ENCODE measurements at regions of chr18 and their contacts with region 1.

Region 1: DNA sequence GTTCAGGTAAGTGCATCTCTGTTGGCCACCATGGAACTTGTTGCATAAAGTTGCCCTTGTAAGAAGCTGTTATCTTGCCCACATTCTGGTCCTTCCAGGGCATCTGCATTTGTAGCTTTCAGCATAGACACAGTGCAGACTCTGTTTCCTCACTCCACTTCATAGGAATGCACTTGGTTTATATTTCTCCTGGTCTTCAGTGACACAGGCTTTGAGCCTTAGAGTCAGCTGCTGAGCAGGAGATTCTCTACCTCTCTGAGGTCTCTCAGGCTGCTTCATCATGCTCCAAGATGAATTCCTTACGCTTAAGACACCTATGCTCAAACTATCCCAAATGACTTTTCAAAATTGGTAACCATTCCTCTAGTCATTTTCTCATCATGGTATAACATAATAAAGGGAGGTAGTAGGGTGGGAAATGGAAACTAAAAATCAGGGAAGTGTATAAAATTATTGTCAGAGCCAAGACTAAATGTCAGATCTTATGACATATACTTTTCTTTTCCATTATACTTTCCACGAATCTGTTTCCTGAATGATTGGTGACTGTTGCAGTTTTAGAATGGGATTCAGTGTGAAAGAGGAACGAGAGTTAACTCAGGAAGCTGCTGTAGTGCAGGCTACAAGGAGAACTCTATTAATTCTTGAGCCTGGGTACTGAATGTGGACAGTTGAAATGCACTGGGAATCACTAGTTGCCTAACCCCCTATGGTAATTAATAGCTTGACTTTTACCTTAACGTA is 72.0 kb downstream of the GALNT1 start:
- DNase-seq: no peak
- H3K4me3 ChIP-seq: no peak overlapping the region
- H3K27ac ChIP-seq: no peak overlapping the region
- H3K4me1 ChIP-seq: no peaks in the 10 kb centered on the region
- H3K27me3 ChIP-seq: no peaks in the 10 kb centered on the region
- CTCF ChIP-seq: no peak
- EP300 ChIP-seq: no peak
- POLR2A ChIP-seq: no peak

Region 2: DNA sequence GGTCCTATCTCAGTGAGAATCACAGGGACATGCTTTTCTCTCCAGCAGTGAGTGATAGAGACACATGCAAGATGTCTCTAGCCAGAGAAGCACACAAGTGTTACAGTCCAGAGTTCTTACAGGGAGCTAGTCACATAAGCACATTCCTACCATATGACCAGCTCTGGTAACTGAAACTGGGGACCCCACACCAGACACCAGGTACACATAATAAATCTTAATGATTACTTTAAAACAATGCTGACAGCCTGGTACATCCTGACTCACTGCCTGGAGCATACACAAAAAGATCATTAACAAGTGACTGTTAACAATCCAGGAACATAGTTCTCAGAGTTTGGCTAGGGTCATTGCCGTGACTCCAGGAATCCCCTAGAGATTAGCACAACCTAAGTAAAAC is 18.4 kb before region 1 on chr18:
- in situ Hi-C with region 1: no loop called
- intact Hi-C with region 1: loop called (anchors 1 kb)
- DNase-seq: no peak
- H3K4me3 ChIP-seq: no peak overlapping the region
- H3K27ac ChIP-seq: peak overlapping the region in 2 of 4 donors; percentile 8 to 23
- H3K4me1 ChIP-seq: peaks cover 0 to 11% (median 1%) of the 10 kb centered on the region in 4 donors
- H3K27me3 ChIP-seq: no peaks in the 10 kb centered on the region
- CTCF ChIP-seq: no peak
- EP300 ChIP-seq: peak; percentile 58
- POLR2A ChIP-seq: no peak

Measured in transverse colon (tissue), 4 donors.